ENCODE measurements at regions of chr7 and their contacts with region 1.

Region 1: GRCh38 chr7:17298207-17298839 is at the start of gene AHR:
- DNase-seq: peak; percentile 85 to 87
- H3K4me3 ChIP-seq: peak within 1 kb of the TSS; percentile 83
- H3K27ac ChIP-seq: peak within 1 kb of the TSS; percentile 68
- H3K4me1 ChIP-seq: peaks cover 36% of the 10 kb centered on the region
- H3K27me3 ChIP-seq: no peaks in the 10 kb centered on the region
- CTCF ChIP-seq: no peak
- total RNA-seq, gene AHR: 46.4 and 61.3 TPM in 2 replicates

Region 2: DNA sequence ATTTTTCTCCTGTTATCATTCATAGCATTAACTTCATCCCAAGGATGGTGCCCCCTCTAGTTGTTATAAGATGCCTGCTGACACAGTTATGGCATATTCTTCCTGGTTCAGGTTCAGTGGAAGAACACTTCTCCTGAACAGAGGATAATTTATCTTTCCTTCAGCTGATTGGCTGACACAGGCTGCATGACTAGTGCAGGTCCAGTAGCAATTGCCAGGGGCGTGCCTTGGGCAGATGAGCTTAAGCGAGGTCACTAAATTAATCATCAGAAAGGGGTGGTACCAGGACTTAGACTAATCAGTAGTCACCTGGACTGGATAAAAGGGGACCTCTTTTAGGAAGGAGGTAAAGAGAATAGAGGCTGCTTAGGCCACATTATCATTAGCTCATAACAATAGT is 610.1 kb before region 1 on chr7:
- CTCF ChIA-PET with region 1: interaction called, 10 read pairs
- POLR2A ChIA-PET with region 1: no interaction called
- intact Hi-C with region 1: loop called (anchors 10 kb)
- DNase-seq: peak in 1 of 2 experiments; percentile 58
- H3K4me3 ChIP-seq: no peak overlapping the region
- H3K27ac ChIP-seq: no peak overlapping the region
- H3K4me1 ChIP-seq: no peaks in the 10 kb centered on the region
- H3K27me3 ChIP-seq: no peaks in the 10 kb centered on the region
- CTCF ChIP-seq: no peak

Region 3: GRCh38 chr7:16801111-16801542 is 497.2 kb before region 1 on chr7:
- CTCF ChIA-PET with region 1: no interaction called
- POLR2A ChIA-PET with region 1: interaction called, 3 read pairs
- intact Hi-C with region 1: loop called (anchors 10 kb)
- DNase-seq: peak; percentile 15 to 79
- H3K4me3 ChIP-seq: no peak overlapping the region
- H3K27ac ChIP-seq: no peak overlapping the region
- H3K4me1 ChIP-seq: peaks cover 50% of the 10 kb centered on the region
- H3K27me3 ChIP-seq: no peaks in the 10 kb centered on the region
- CTCF ChIP-seq: peak; percentile 85

Region 4: GRCh38 chr7:17130281-17131059 is 167.9 kb before region 1 on chr7:
- CTCF ChIA-PET with region 1: no interaction called
- POLR2A ChIA-PET with region 1: interaction called, 26 read pairs
- intact Hi-C with region 1: no loop called
- DNase-seq: peak; percentile 49 to 100
- H3K4me3 ChIP-seq: peak overlapping the region; percentile 17; the same call in 1 of the 2 replicates
- H3K27ac ChIP-seq: peak overlapping the region; percentile 59
- H3K4me1 ChIP-seq: peaks cover 20% of the 10 kb centered on the region
- H3K27me3 ChIP-seq: no peaks in the 10 kb centered on the region
- CTCF ChIP-seq: no peak

Region 5: DNA sequence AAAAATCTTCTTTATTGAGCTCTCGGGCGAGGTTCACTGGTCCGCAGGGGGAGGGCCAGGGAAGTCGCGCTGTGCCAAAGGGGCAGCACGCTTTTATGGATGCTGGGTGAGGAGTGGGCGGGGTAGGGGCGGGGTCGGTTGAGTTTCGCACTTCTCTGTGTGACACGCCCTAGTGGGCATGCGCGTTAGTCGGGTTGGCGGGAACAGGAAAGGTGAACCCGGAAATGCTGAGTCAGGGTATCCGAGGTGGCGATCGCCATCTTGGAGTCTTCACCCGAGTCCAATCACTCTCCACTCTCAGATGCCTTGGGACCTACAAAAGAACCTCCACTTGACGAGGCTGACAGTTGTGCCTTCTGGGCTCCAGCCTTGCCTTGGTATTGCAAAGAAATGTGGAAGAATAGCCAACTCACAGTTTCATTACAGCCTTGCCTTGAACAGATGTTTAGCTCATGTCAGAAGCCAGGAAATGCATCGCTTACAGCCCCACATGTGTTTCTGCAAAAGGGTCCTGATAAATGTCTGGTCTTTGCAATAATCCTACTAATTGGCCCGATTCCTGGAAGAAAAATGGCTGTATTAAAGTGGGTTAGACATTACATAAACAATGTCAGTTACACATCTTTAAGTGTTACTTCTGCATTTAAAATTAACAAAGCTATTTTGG is 64.2 kb after region 1 on chr7:
- CTCF ChIA-PET with region 1: no interaction called
- POLR2A ChIA-PET with region 1: no interaction called
- intact Hi-C with region 1: no loop called
- DNase-seq: no peak
- H3K4me3 ChIP-seq: no peak overlapping the region
- H3K27ac ChIP-seq: no peak overlapping the region
- H3K4me1 ChIP-seq: peaks cover 7% of the 10 kb centered on the region; the same call in 1 of the 2 replicates
- H3K27me3 ChIP-seq: no peaks in the 10 kb centered on the region
- CTCF ChIP-seq: no peak

Region 6: GRCh38 chr7:17444673-17445072 is 146.3 kb after region 1 on chr7:
- CTCF ChIA-PET with region 1: no interaction called
- POLR2A ChIA-PET with region 1: interaction called, 5 read pairs
- intact Hi-C with region 1: loop called (anchors 10 kb)
- DNase-seq: peak; percentile 34 to 81
- H3K4me3 ChIP-seq: no peak overlapping the region
- H3K27ac ChIP-seq: peak overlapping the region; percentile 51
- H3K4me1 ChIP-seq: peaks cover 30% of the 10 kb centered on the region
- H3K27me3 ChIP-seq: no peaks in the 10 kb centered on the region
- CTCF ChIP-seq: no peak

Region 7: DNA sequence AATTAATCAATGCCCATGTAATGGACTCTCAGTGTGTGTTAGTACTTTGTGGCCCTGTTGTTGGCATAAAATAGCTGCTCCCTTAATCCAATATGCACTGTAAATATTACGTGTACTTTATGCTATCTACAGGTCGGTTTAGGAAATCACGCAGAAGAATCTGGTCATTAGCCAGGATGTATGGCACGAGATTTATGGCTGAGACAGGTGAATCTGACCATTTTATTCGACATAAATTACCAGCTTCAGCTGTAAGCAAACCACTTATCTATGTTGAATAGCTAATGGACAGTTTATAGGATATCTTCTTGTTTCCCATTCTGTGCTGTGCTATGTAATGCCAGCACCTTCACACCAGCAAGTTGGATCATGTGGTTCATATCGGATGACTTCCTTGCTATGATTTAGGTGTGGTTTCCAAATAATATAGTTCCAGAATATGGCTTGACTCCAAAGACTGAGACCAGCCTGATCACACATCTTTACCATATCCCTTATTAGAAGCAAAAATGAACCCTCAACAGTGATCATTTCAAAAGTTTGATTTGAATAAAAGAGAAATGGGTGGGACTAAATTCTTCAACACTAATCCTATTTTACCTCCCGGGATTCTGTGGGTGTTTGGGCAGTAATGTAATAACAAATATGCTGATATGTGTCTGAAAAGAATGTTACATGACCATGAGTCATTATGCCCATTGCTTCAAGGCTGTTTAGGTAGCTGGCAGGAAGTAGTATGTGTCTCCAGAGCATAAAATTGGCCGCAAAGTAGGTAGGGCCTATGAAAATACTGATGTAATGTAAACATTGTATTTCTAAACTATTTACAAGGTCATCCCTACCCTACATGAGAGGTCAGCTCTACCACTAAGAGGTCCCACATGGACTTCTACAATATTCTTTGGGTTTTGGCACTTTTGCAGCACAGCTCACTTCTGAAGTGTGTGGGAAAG is 301.7 kb after region 1 on chr7:
- CTCF ChIA-PET with region 1: no interaction called
- POLR2A ChIA-PET with region 1: no interaction called
- intact Hi-C with region 1: loop called (anchors 5 kb)
- DNase-seq: peak; percentile 58 to 99
- H3K4me3 ChIP-seq: no peak overlapping the region
- H3K27ac ChIP-seq: peak overlapping the region; percentile 82
- H3K4me1 ChIP-seq: peaks cover 39% of the 10 kb centered on the region
- H3K27me3 ChIP-seq: no peaks in the 10 kb centered on the region
- CTCF ChIP-seq: no peak

Measured in PC-9 (cell line).